B cell (primary cell): ENCODE measurements at regions of chr12 and their contacts with region 1.

Region 1: DNA sequence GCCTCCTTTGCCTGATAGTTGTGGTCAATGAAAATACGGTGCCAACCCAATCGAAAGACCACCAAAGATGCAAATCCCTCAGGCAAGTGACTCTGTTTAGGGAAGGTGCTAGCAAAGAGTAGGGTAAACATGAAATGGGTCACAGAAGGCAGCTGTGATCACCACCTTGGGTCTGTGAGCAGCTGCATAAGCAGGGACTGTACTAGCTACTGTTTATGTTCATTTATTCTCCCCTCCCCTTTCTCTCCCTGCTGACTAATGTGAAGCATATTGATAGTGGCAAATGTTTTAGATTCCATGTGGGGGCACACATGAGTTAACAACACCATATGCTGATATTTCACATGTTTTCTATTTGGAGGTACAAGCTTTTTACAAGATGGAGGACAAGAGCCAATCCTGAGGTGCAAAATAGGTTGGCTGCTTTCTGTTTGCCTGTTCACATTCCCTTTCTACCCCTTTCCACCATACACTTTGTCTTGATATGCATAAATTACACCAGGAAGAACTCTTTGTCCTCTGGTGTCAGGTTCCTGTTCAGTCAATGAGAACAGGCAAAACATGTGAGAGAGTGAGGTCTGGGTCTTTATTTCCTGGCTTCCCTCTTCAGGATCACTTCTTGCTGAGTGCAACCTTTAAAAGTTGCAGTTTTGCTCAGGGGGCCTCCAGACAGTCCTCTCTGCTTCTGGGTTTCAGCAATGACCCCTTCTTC is 71.1 kb downstream of the AVPR1A start:
- DNase-seq: no peak
- ATAC-seq: no peak
- H3K4me3 ChIP-seq: no peak overlapping the region
- H3K4me3 Mint-ChIP-seq: no peak overlapping the region
- H3K27ac ChIP-seq: no peak overlapping the region
- H3K27ac Mint-ChIP-seq: no peak overlapping the region
- H3K4me1 ChIP-seq: no peaks in the 10 kb centered on the region
- H3K4me1 Mint-ChIP-seq: no peaks in the 10 kb centered on the region
- H3K27me3 ChIP-seq: no peaks in the 10 kb centered on the region
- H3K27me3 Mint-ChIP-seq: no peaks in the 10 kb centered on the region
- CTCF ChIP-seq: no peak

Region 2: GRCh38 chr12:62834971-62835547 is 244.9 kb before region 1 on chr12:
- CTCF ChIA-PET with region 1: no interaction called
- POLR2A ChIA-PET with region 1: no interaction called
- intact Hi-C with region 1: no loop called
- DNase-seq: no peak
- ATAC-seq: no peak
- H3K4me3 ChIP-seq: no peak overlapping the region
- H3K4me3 Mint-ChIP-seq: no peak overlapping the region
- H3K27ac ChIP-seq: no peak overlapping the region
- H3K27ac Mint-ChIP-seq: no peak overlapping the region
- H3K4me1 ChIP-seq: no peaks in the 10 kb centered on the region
- H3K4me1 Mint-ChIP-seq: no peaks in the 10 kb centered on the region
- H3K27me3 ChIP-seq: no peaks in the 10 kb centered on the region
- H3K27me3 Mint-ChIP-seq: peaks cover 3% of the 10 kb centered on the region
- CTCF ChIP-seq: no peak

Region 3: GRCh38 chr12:63129927-63130326 is 50.0 kb after region 1 on chr12:
- CTCF ChIA-PET with region 1: no interaction called
- POLR2A ChIA-PET with region 1: no interaction called
- intact Hi-C with region 1: loop called (anchors 10 kb)
- DNase-seq: no peak
- ATAC-seq: no peak
- H3K4me3 ChIP-seq: no peak overlapping the region
- H3K4me3 Mint-ChIP-seq: no peak overlapping the region
- H3K27ac ChIP-seq: no peak overlapping the region
- H3K27ac Mint-ChIP-seq: no peak overlapping the region
- H3K4me1 ChIP-seq: no peaks in the 10 kb centered on the region
- H3K4me1 Mint-ChIP-seq: no peaks in the 10 kb centered on the region
- H3K27me3 ChIP-seq: no peaks in the 10 kb centered on the region
- H3K27me3 Mint-ChIP-seq: no peaks in the 10 kb centered on the region
- CTCF ChIP-seq: no peak

Region 4: GRCh38 chr12:63400718-63401117 is 320.8 kb after region 1 on chr12:
- CTCF ChIA-PET with region 1: no interaction called
- POLR2A ChIA-PET with region 1: no interaction called
- intact Hi-C with region 1: no loop called
- DNase-seq: no peak
- ATAC-seq: no peak
- H3K4me3 ChIP-seq: no peak overlapping the region
- H3K4me3 Mint-ChIP-seq: no peak overlapping the region
- H3K27ac ChIP-seq: no peak overlapping the region
- H3K27ac Mint-ChIP-seq: no peak overlapping the region
- H3K4me1 ChIP-seq: no peaks in the 10 kb centered on the region
- H3K4me1 Mint-ChIP-seq: no peaks in the 10 kb centered on the region
- H3K27me3 ChIP-seq: no peaks in the 10 kb centered on the region
- H3K27me3 Mint-ChIP-seq: no peaks in the 10 kb centered on the region
- CTCF ChIP-seq: no peak